Activated CD4-positive, alpha-beta T cell treated with anti-CD3 and anti-CD28 coated beads for 36 hours (primary cell): ENCODE measurements at regions of chr12 and their contacts with region 1.

Region 1: GRCh38 chr12:67804168-67804567 is 155.6 kb downstream of the DYRK2 start:
- DNase-seq: peak; percentile 76
- ATAC-seq: peak; percentile 98
- H3K4me3 Mint-ChIP-seq: no peak overlapping the region
- H3K27ac Mint-ChIP-seq: no peak overlapping the region
- H3K4me1 Mint-ChIP-seq: peaks cover 27% of the 10 kb centered on the region
- H3K27me3 Mint-ChIP-seq: peaks cover 4% of the 10 kb centered on the region

Region 2: GRCh38 chr12:67355578-67356379 is 448.4 kb before region 1 on chr12:
- CTCF ChIA-PET with region 1: interaction called, 3 read pairs
- POLR2A ChIA-PET with region 1: no interaction called
- intact Hi-C with region 1: loop called in 1 of 2 experiments (anchors 10 kb)
- DNase-seq: peak; percentile 22
- ATAC-seq: peak; percentile 65
- H3K4me3 Mint-ChIP-seq: no peak overlapping the region
- H3K27ac Mint-ChIP-seq: no peak overlapping the region
- H3K4me1 Mint-ChIP-seq: peaks cover 29% of the 10 kb centered on the region
- H3K27me3 Mint-ChIP-seq: no peaks in the 10 kb centered on the region

Region 3: DNA sequence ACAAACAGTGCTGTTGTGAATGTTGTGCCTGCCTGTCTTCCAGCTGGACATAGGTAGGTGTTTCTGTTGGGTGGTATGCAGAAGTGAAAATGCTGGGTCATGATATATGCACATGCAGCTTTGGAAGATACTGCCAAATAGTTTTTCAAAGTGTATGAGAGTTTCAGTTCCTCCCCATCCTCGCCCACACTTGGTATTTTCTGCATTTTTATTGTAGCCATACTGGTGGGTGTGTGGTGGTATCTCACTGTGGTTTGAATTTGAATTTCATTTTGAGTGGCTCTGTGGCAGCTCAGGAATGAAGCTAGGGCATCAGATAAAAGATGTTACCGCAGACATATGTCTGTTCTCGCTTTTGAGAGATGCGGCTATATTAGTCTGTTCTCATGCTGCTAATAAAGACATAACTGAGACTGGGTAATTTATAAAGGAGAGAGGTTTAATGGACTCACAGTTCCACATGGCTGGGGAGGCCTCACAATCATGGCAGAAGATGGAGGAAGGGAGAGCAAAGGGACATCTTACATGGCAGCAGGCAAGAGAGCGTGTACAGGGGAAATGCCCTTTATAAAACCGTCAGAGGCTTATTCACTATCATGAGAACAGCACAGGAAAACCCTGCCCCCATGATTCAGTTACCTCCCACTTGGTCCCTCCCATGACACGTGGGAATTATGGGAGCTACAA is 351.9 kb before region 1 on chr12:
- CTCF ChIA-PET with region 1: no interaction called
- POLR2A ChIA-PET with region 1: no interaction called
- intact Hi-C with region 1: loop called in 1 of 2 experiments (anchors 1 kb)
- DNase-seq: peak; percentile 50
- ATAC-seq: peak; percentile 69
- H3K4me3 Mint-ChIP-seq: no peak overlapping the region
- H3K27ac Mint-ChIP-seq: peak overlapping the region; percentile 6
- H3K4me1 Mint-ChIP-seq: peaks cover 44% of the 10 kb centered on the region
- H3K27me3 Mint-ChIP-seq: peaks cover 22% of the 10 kb centered on the region

Region 4: DNA sequence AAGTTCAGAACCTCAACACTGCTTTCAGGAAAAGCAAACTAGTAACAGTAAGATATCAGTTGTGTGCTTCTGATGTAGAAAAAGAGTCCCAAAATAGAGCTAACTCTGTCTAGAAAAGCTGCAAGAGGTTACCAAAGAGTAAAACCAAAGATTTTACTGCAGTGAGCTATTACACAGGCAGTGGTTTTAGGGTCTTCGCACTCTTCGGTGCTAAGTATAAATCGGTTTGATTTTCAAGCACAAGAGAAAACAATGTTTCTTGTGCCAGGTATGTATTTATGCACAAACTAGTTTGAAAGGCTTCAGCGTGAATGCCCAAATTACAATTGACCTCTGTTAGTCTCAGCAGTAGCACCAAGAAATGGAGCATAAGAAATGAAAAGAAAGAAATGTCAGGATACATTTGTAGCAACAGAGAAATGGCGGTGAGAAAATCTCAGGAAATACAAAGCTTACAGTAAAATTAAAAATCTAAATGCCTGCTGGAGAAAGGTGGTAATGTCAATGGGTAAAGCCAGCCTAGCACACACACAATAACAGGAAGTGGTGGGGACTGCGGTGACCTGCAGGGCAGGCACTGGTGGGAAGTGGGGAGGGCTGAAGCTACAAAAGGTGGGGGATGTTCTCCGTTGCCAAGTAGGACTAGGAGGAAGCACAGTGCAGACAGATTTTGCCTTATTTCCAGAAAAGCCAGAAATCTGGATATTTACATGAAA is 173.6 kb before region 1 on chr12:
- CTCF ChIA-PET with region 1: no interaction called
- POLR2A ChIA-PET with region 1: no interaction called
- intact Hi-C with region 1: no loop called
- DNase-seq: peak; percentile 90
- ATAC-seq: peak; percentile 93
- H3K4me3 Mint-ChIP-seq: peak overlapping the region; percentile 56
- H3K27ac Mint-ChIP-seq: peak overlapping the region; percentile 90
- H3K4me1 Mint-ChIP-seq: peaks cover 72% of the 10 kb centered on the region
- H3K27me3 Mint-ChIP-seq: no peaks in the 10 kb centered on the region

Region 5: DNA sequence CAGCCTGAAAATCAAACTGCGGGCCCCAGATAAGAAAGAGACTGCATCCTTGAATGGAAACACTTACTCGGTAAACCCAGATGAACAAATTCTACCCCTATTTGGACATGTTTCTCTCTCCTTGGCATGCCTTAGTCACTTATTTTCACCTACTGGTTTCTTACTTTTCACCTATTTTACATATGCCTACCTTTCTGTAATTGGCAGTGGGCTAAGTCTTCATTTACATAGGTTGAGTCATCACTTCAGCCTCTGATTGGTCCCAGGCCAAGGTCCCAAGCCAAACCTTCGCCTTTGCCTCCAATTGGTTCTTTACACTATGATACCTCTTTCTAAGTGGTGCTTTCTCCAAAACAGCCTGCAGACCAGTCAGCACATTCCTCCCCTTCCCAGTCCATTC is 44.3 kb before region 1 on chr12:
- CTCF ChIA-PET with region 1: no interaction called
- POLR2A ChIA-PET with region 1: no interaction called
- intact Hi-C with region 1: loop called in 1 of 2 experiments (anchors 1 kb)
- DNase-seq: peak; percentile 38
- ATAC-seq: peak; percentile 94
- H3K4me3 Mint-ChIP-seq: no peak overlapping the region
- H3K27ac Mint-ChIP-seq: peak overlapping the region; percentile 86
- H3K4me1 Mint-ChIP-seq: peaks cover 41% of the 10 kb centered on the region
- H3K27me3 Mint-ChIP-seq: no peaks in the 10 kb centered on the region

Region 6: GRCh38 chr12:67816269-67816668 is 12.1 kb after region 1 on chr12:
- CTCF ChIA-PET with region 1: no interaction called
- POLR2A ChIA-PET with region 1: no interaction called
- intact Hi-C with region 1: no loop called
- DNase-seq: no peak
- ATAC-seq: no peak
- H3K4me3 Mint-ChIP-seq: no peak overlapping the region
- H3K27ac Mint-ChIP-seq: no peak overlapping the region
- H3K4me1 Mint-ChIP-seq: peaks cover 10% of the 10 kb centered on the region
- H3K27me3 Mint-ChIP-seq: no peaks in the 10 kb centered on the region

Region 7: GRCh38 chr12:67827820-67828383 is 23.7 kb after region 1 on chr12:
- CTCF ChIA-PET with region 1: no interaction called
- POLR2A ChIA-PET with region 1: no interaction called
- intact Hi-C with region 1: loop called (anchors 1 kb)
- DNase-seq: peak; percentile 77
- ATAC-seq: peak; percentile 99
- H3K4me3 Mint-ChIP-seq: peak overlapping the region; percentile 17
- H3K27ac Mint-ChIP-seq: peak overlapping the region; percentile 72
- H3K4me1 Mint-ChIP-seq: peaks cover 22% of the 10 kb centered on the region
- H3K27me3 Mint-ChIP-seq: no peaks in the 10 kb centered on the region

Region 8: DNA sequence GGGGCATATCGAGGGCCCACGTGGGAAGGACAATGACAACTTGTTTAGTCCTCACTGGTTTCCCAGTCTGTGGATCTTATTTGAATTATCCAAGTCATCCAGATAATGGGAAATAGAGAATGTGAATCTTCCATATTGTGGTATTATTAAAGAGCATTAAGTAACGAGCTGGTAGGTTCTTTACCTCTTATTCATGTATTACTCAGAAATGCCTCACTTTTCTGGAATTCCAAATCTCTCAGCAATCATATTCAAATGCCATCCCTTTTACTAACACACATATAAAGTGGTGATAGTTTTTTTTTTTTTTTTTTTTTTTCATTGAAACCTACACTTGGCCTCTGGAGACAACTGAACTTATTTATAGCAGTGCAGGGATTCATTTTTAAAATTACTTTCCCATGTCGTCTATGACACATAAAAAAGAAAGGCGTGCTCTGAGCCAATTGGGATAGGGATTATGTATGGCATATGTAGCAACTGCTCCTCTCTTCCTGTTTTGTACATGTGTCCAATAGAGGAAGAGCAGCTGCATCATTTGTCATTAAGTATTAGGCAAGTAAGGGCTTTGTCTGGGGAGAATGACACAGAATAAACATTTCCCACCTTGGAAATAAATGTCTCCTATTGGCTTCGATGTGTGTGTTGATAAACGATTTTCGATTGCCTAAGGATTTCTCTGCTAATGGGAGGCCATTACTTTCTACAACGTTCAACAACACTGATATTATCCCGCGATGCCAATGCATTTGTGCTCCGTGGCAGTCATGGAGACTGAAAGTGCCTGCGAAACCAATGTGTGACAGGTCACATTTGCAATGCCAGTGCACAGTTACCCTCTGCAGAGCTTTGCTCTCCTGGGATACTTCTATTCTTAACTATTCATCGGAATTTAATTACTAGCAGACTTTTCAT is 106.4 kb after region 1 on chr12:
- CTCF ChIA-PET with region 1: no interaction called
- POLR2A ChIA-PET with region 1: no interaction called
- intact Hi-C with region 1: no loop called
- DNase-seq: no peak
- ATAC-seq: no peak
- H3K4me3 Mint-ChIP-seq: no peak overlapping the region
- H3K27ac Mint-ChIP-seq: no peak overlapping the region
- H3K4me1 Mint-ChIP-seq: no peaks in the 10 kb centered on the region
- H3K27me3 Mint-ChIP-seq: no peaks in the 10 kb centered on the region

Region 9: GRCh38 chr12:68428724-68429501 is 624.7 kb after region 1 on chr12:
- CTCF ChIA-PET with region 1: no interaction called
- POLR2A ChIA-PET with region 1: no interaction called
- intact Hi-C with region 1: no loop called
- DNase-seq: no peak
- ATAC-seq: no peak
- H3K4me3 Mint-ChIP-seq: no peak overlapping the region
- H3K27ac Mint-ChIP-seq: no peak overlapping the region
- H3K4me1 Mint-ChIP-seq: no peaks in the 10 kb centered on the region
- H3K27me3 Mint-ChIP-seq: no peaks in the 10 kb centered on the region